Activated CD8-positive, alpha-beta T cell treated with anti-CD3 and anti-CD28 coated beads, Interleukin-2, amount 10 ng/mL, durations not matched to agents 7 days and 5 days (primary cell): ENCODE measurements at regions of chr7 and their contacts with region 1.

Region 1: DNA sequence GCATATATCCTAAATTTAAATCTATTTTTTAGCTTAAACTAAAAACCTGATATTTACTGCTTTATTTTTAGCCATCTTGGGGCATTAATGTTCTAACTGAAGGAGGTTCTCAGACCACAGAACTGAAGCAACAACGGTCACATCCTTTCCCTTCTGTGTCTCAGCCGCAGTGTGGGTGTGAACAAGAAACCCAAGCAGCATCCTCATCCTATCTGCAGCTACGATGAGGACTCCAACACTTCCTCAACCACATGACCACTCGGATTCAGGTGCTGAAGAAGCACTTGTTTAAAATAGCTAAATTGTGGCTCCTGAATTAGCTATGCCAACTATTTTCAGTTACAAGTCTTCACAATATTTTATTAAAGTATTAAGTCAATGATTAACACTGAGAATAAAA is 5.3 kb downstream of the ESYT2 start:
- DNase-seq: peak; percentile 86
- ATAC-seq: peak; percentile 71
- H3K4me3 Mint-ChIP-seq: peak overlapping the region; percentile 58
- H3K27ac Mint-ChIP-seq: peak overlapping the region; percentile 80
- H3K4me1 Mint-ChIP-seq: peaks cover 68% of the 10 kb centered on the region
- H3K27me3 Mint-ChIP-seq: no peaks in the 10 kb centered on the region

Region 2: DNA sequence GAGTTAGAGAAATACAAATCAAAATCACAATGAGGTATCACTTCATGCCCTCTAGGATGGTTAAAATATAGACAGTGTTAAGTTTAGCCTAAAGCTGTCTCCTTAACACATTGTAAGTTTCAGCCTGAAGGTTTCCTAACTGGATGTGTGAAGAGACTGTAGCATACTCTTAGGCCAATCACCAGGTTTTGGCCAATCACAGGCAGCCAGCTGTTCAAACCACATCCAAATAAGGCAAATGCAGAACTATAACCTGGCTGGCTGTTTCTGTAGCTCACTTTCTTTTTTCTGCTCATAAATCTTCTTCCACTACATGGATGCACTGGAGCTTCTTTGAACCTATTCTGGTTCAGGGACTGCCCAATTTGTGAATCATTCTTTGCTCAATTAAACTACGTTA is 14.4 kb before region 1 on chr7:
- CTCF ChIA-PET with region 1: interaction called, 14 read pairs
- POLR2A ChIA-PET with region 1: interaction called, 29 read pairs
- DNase-seq: no peak
- ATAC-seq: no peak
- H3K4me3 Mint-ChIP-seq: no peak overlapping the region
- H3K27ac Mint-ChIP-seq: peak overlapping the region; percentile 65
- H3K4me1 Mint-ChIP-seq: peaks cover 72% of the 10 kb centered on the region
- H3K27me3 Mint-ChIP-seq: no peaks in the 10 kb centered on the region

Region 3: GRCh38 chr7:159098811-159099655 is 275.0 kb after region 1 on chr7:
- CTCF ChIA-PET with region 1: no interaction called
- POLR2A ChIA-PET with region 1: no interaction called
- DNase-seq: no peak
- ATAC-seq: no peak
- H3K4me3 Mint-ChIP-seq: no peak overlapping the region
- H3K27ac Mint-ChIP-seq: no peak overlapping the region
- H3K4me1 Mint-ChIP-seq: no peaks in the 10 kb centered on the region
- H3K27me3 Mint-ChIP-seq: no peaks in the 10 kb centered on the region